ENCODE measurements at regions of chr9 and their contacts with region 1.

Region 1: GRCh38 chr9:36487482-36488388 is 85.0 kb upstream of the MELK start:
- DNase-seq: peak; percentile 87
- H3K4me3 ChIP-seq: peak overlapping the region; percentile 55 to 92 (median 90)
- H3K27ac ChIP-seq: peak overlapping the region; percentile 64
- H3K4me1 ChIP-seq: peaks cover 18% of the 10 kb centered on the region
- H3K27me3 ChIP-seq: no peaks in the 10 kb centered on the region
- CTCF ChIP-seq: no peak

Region 2: GRCh38 chr9:36560857-36561221 is 73.1 kb after region 1 on chr9:
- CTCF ChIA-PET with region 1: no interaction called
- dilution Hi-C with region 1: no loop called
- in situ Hi-C with region 1: no loop called
- intact Hi-C with region 1: loop called (anchors 5 kb)
- DNase-seq: no peak
- H3K4me3 ChIP-seq: no peak overlapping the region
- H3K27ac ChIP-seq: no peak overlapping the region
- H3K4me1 ChIP-seq: peaks cover 10% of the 10 kb centered on the region
- H3K27me3 ChIP-seq: no peaks in the 10 kb centered on the region
- CTCF ChIP-seq: no peak

Region 3: GRCh38 chr9:36659500-36659899 is 171.8 kb after region 1 on chr9:
- CTCF ChIA-PET with region 1: no interaction called
- dilution Hi-C with region 1: no loop called
- in situ Hi-C with region 1: no loop called
- intact Hi-C with region 1: no loop called
- DNase-seq: no peak
- H3K4me3 ChIP-seq: no peak overlapping the region
- H3K27ac ChIP-seq: no peak overlapping the region
- H3K4me1 ChIP-seq: no peaks in the 10 kb centered on the region
- H3K27me3 ChIP-seq: no peaks in the 10 kb centered on the region
- CTCF ChIP-seq: no peak

Measured in mammary epithelial cell (primary cell).